ENCODE measurements at regions of chr3 and their contacts with region 1.

Region 1: DNA sequence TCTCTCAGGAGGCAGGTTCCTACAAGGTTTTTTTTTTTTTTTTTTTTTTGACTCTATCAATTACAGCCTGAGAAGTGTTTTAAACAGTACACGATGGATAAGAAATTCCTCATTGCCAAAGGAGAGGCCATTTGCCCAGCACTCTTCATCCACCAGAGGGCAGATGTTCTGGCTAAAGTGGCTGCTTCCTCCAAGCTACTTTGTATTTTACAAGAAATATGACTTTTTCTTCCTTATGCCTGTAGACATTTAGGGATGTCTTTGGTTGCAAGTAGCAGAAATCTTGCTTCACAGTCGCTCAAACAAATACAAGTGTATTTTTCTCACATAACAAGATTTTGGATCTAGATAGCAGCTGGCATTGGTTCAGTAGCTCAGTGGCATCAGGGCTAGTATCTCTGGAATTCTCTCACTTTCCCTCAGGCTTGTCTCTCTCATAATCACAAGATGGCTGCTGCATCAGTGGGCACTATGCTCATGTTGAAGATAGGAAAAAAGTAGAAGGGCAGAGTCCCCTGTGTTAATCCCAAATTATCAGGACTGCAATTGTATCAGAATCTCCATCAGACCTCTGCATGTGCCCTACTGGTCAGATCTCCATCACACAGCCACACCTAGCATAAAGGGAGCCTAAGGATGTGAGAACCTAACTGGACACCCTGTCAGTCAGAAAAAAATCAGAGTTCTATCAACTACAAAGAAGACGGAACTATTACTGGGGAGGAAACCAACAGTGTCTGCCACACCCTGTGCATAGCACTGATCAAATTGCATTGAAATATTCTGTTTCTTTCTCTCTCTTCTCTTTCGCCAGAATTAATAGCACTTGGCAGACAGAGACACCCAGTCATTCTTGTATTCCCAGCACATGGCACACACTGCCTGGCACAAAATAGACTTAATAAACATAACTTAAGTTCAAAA is 138.9 kb upstream of the COL8A1 start:
- DNase-seq: peak; percentile 24
- H3K4me3 Mint-ChIP-seq: no peak overlapping the region
- H3K27ac Mint-ChIP-seq: no peak overlapping the region
- H3K4me1 Mint-ChIP-seq: no peaks in the 10 kb centered on the region
- H3K27me3 Mint-ChIP-seq: no peaks in the 10 kb centered on the region

Region 2: DNA sequence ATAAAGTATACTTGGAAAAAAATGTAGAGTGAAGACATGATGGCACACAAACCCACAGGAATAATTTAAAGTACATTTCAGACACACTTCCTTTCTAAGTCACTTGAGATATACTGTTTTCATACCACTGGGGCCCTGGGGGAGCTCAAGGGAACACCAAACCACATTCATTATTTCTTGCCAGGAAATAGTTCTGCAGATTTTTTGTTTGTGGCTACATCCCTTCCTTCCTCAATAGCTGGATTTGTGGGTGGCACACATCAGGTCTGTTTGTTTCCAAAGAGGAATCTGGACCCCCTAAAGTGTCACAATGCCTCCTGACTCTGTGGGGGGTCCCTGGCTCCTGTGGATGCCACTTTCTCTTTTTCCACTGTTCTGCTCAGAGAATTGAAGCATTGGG is 14.6 kb before region 1 on chr3:
- CTCF ChIA-PET with region 1: no interaction called
- DNase-seq: no peak
- H3K4me3 Mint-ChIP-seq: no peak overlapping the region
- H3K27ac Mint-ChIP-seq: no peak overlapping the region
- H3K4me1 Mint-ChIP-seq: no peaks in the 10 kb centered on the region
- H3K27me3 Mint-ChIP-seq: no peaks in the 10 kb centered on the region

Region 3: DNA sequence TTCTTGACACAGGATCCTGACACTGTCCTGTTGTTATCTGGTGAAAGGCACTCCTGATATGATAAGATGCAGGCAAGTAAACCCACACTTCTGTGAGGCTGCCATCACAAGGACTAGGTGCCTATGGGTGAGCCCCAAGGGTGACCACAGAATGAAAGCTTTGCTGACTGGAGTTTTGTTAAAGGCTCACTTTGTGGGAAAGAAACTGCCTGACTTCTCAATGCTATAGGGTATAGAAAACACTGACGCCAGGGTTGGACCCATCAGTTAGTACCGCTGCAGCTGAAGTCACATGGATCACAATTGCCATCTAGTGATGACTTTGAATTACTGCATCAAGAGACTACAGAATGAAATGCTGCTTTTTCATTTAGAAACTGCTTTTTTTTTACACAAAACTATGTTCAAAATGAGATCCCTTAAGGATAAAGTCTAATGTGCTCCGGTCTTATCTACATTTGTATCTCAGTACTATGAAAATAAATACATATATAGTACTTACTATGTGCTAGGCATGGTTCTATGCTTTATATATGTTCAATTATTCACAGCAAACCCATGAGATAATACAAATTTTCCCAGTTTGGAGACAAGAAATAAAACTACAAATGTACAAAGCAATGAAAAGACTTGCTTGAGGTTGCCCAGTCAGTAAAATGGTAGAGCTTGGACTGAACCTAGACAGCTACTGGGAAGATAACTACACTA is 253.9 kb after region 1 on chr3:
- CTCF ChIA-PET with region 1: interaction called, 14 read pairs
- DNase-seq: peak; percentile 26
- H3K4me3 Mint-ChIP-seq: no peak overlapping the region
- H3K27ac Mint-ChIP-seq: no peak overlapping the region
- H3K4me1 Mint-ChIP-seq: no peaks in the 10 kb centered on the region
- H3K27me3 Mint-ChIP-seq: no peaks in the 10 kb centered on the region